ENCODE measurements at regions of chr10 and their contacts with region 1.

Region 1: GRCh38 chr10:79286318-79286951 is 60.8 kb upstream of the PPIF start:
- DNase-seq: peak; percentile 51 to 80 (median 75)
- ATAC-seq: peak; percentile 92
- H3K4me3 ChIP-seq: peak overlapping the region; percentile 34
- H3K4me3 Mint-ChIP-seq: peak overlapping the region; percentile 70 to 80 (median 74)
- H3K27ac ChIP-seq: no peak overlapping the region
- H3K27ac Mint-ChIP-seq: peak overlapping the region; percentile 49 to 88 (median 66)
- H3K4me1 ChIP-seq: peaks cover 21 to 31% of the 10 kb centered on the region in 2 donors
- H3K4me1 Mint-ChIP-seq: peaks cover 24 to 52% (median 38%) of the 10 kb centered on the region in 7 donors
- H3K27me3 ChIP-seq: no peaks in the 10 kb centered on the region
- H3K27me3 Mint-ChIP-seq: no peaks in the 10 kb centered on the region

Region 2: DNA sequence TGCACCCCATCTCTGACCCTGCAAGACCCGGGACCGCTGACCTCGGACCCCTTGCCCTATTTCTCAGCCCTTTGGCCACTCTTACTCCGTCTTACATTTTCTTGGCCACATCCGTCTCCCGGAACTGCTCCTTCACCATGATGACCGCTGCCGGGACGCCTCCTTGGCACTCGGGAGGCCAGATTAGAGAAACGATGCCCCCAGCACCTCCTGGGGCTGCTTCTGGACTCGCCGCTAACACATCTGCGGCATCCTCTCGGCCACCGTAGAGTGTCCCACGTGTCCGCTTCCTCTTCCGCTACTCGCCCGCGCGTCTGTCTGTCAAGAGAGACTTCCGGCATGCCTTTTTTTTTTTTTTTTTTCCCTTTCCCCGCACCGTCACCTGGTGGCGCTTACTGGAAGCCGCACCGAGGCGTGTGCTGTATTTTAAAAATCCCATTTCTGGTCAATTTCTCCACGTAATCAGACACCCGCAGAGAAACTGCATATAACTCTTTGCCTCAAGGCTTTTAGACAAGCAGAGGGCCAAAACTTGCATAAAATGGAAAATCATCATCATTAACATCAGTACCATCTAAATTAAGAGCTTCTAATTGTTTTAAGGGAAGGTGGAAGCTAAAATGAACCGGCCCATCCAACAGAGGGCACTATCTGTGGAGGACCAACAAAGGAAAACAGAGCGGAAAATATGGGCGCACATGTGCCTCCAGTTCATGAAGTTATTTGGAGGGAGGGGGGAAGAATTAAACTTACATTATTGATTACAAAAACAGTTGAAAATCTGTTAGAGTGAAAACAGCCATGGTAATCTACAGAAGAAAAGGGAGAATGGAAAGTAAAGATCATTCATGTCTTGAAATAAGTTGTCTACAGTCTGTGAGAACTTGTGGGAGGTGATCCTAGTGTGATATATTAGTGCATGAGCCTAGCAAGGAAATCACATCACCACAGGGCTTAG is 1256.9 kb before region 1 on chr10 and contains the start of gene POLR3A:
- CTCF ChIA-PET with region 1: no interaction called
- POLR2A ChIA-PET with region 1: no interaction called
- intact Hi-C with region 1: loop called in 1 of 2 experiments (anchors 1 kb)
- DNase-seq: peak; percentile 79 to 94 (median 90)
- ATAC-seq: peak; percentile 77
- H3K4me3 ChIP-seq: peak within 1 kb of the TSS; percentile 99
- H3K4me3 Mint-ChIP-seq: peak within 1 kb of the TSS; percentile 92 to 100 (median 99)
- H3K27ac ChIP-seq: peak within 1 kb of the TSS; percentile 89
- H3K27ac Mint-ChIP-seq: peak within 1 kb of the TSS; percentile 88 to 99 (median 95)
- H3K4me1 ChIP-seq: peaks cover 12 to 19% of the 10 kb centered on the region in 2 donors
- H3K4me1 Mint-ChIP-seq: peaks cover 22 to 50% (median 37%) of the 10 kb centered on the region in 7 donors
- H3K27me3 ChIP-seq: no peaks in the 10 kb centered on the region
- H3K27me3 Mint-ChIP-seq: no peaks in the 10 kb centered on the region
- total RNA-seq, gene POLR3A: 12.0 to 20.9 (median 19.0) TPM

Region 3: DNA sequence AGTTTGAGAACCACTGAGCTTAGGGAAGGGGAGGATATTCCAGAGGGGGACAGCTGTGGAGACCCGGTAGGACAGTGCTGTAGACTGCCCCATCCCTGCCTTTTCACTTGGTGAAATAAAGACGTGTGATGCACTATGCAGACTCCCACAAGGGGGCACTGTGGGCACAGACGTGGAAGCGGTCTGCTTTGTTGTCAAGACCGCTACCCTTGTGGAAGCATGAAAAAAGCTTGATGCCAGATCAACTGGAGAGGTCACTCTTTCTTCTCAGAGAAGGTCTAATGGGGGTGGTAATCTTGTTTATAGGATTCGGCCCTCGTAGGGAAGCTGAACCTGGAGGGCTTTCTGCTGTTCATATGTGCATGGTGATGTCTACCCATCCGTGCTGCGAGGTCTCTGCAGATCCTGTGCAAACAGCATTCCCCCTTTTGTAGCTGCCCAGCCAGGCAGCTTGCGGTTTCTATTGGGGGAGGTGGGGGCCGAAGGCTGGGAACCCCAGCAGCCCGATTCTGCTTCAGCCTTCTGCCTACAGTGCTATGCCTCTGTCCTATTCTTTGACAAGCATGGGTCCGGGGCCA is 1239.0 kb before region 1 on chr10:
- CTCF ChIA-PET with region 1: no interaction called
- POLR2A ChIA-PET with region 1: no interaction called
- intact Hi-C with region 1: loop called in 1 of 2 experiments (anchors 5 kb)
- DNase-seq: peak; percentile 65 to 80 (median 74)
- ATAC-seq: peak; percentile 92
- H3K4me3 ChIP-seq: no peak overlapping the region
- H3K4me3 Mint-ChIP-seq: peak overlapping the region in 2 of 10 donors; percentile 11 to 27
- H3K27ac ChIP-seq: no peak overlapping the region
- H3K27ac Mint-ChIP-seq: peak overlapping the region in 2 of 9 donors; percentile 4 to 9
- H3K4me1 ChIP-seq: no peaks in the 10 kb centered on the region
- H3K4me1 Mint-ChIP-seq: peaks cover 5 to 26% (median 16%) of the 10 kb centered on the region in 7 donors
- H3K27me3 ChIP-seq: no peaks in the 10 kb centered on the region
- H3K27me3 Mint-ChIP-seq: no peaks in the 10 kb centered on the region

Region 4: GRCh38 chr10:79242620-79243152 is 43.7 kb before region 1 on chr10:
- CTCF ChIA-PET with region 1: no interaction called
- POLR2A ChIA-PET with region 1: no interaction called
- intact Hi-C with region 1: loop called (anchors 1 kb)
- DNase-seq: peak; percentile 6 to 71 (median 35)
- ATAC-seq: peak; percentile 39
- H3K4me3 ChIP-seq: peak overlapping the region; percentile 37
- H3K4me3 Mint-ChIP-seq: peak overlapping the region; percentile 43 to 87 (median 77)
- H3K27ac ChIP-seq: no peak overlapping the region
- H3K27ac Mint-ChIP-seq: peak overlapping the region in 1 of 9 donors; percentile 80
- H3K4me1 ChIP-seq: peaks cover 27 to 38% of the 10 kb centered on the region in 2 donors
- H3K4me1 Mint-ChIP-seq: peaks cover 39 to 58% (median 41%) of the 10 kb centered on the region in 7 donors
- H3K27me3 ChIP-seq: no peaks in the 10 kb centered on the region
- H3K27me3 Mint-ChIP-seq: no peaks in the 10 kb centered on the region

Region 5: DNA sequence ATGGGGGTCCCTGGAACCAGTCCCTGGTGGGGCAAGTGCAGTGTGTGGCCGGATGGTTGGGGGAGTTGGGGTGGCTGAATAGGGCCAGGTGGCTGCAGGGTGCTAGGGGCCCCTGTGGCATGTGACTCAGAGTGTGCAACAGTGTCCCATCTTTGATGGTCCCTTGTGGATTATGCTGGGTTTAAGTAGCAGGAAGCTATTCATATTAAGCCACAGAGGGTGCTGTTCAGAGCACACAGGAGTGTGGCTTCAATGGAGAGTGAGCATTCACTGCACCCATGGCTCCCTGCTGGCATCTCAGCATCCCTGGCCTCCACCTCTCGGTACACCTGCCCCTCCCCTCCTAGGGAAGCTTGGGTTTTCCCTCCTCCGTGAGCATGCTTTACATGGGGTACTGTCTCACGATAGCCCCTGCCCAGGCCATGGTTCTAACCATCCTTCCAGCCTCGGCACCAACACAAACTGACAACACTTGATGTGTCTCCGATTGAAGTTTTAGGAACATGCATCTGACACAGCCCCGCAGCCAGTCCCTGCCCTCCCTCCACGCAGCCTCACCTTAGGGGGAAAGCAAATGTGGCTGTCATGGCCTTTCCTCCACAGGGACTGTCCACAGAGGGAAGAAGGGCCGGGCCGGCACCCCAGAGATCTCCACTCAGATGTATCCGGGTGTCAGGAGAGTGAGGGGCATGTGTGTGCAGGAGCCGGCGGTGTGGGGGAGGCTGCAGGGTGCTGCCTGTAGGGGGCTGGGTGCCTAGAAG is 30.4 kb after region 1 on chr10:
- CTCF ChIA-PET with region 1: no interaction called
- POLR2A ChIA-PET with region 1: interaction called, 6 read pairs
- intact Hi-C with region 1: loop called in 1 of 2 experiments (anchors 1 kb)
- DNase-seq: peak in 1 of 9 donors; percentile 12
- ATAC-seq: peak; percentile 13
- H3K4me3 ChIP-seq: peak overlapping the region; percentile 9
- H3K4me3 Mint-ChIP-seq: peak overlapping the region in 9 of 10 donors; percentile 32 to 86 (median 65)
- H3K27ac ChIP-seq: no peak overlapping the region
- H3K27ac Mint-ChIP-seq: peak overlapping the region in 6 of 9 donors; percentile 31 to 95 (median 88)
- H3K4me1 ChIP-seq: peaks cover 39 to 54% of the 10 kb centered on the region in 2 donors
- H3K4me1 Mint-ChIP-seq: peaks cover 53 to 62% (median 60%) of the 10 kb centered on the region in 7 donors
- H3K27me3 ChIP-seq: no peaks in the 10 kb centered on the region
- H3K27me3 Mint-ChIP-seq: peaks cover 0 to 4% (median 0%) of the 10 kb centered on the region in 5 donors

Region 6: GRCh38 chr10:79322616-79323543 is 36.4 kb after region 1 on chr10:
- CTCF ChIA-PET with region 1: no interaction called
- POLR2A ChIA-PET with region 1: interaction called, 8 read pairs
- intact Hi-C with region 1: loop called in 1 of 2 experiments (anchors 1 kb)
- DNase-seq: peak; percentile 53 to 92 (median 90)
- ATAC-seq: peak; percentile 90
- H3K4me3 ChIP-seq: peak overlapping the region; percentile 20
- H3K4me3 Mint-ChIP-seq: peak overlapping the region; percentile 70 to 88 (median 80)
- H3K27ac ChIP-seq: peak overlapping the region; percentile 65
- H3K27ac Mint-ChIP-seq: peak overlapping the region; percentile 77 to 99 (median 94)
- H3K4me1 ChIP-seq: peaks cover 58 to 63% of the 10 kb centered on the region in 2 donors
- H3K4me1 Mint-ChIP-seq: peaks cover 50 to 74% (median 68%) of the 10 kb centered on the region in 7 donors
- H3K27me3 ChIP-seq: no peaks in the 10 kb centered on the region
- H3K27me3 Mint-ChIP-seq: no peaks in the 10 kb centered on the region

Region 7: DNA sequence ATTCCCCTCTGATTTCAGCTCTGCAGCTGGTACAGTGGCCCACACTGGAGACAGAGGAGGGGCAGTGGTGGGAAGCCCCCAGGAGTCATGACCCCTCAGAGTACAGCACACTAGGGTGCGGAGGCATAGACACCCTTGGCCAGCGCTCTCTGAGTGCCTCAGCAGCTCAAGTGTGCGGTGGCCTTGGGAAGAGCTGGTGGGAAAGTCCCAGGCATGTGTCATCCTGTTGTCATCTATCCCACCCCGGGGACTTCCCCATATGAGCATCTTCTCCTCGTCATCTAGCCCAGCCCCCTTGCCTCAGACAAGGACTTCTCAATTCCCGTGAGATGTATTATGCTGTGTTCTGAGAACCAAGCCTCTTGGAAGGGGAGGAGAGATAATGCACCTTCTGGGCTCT is 45.3 kb after region 1 on chr10:
- CTCF ChIA-PET with region 1: no interaction called
- POLR2A ChIA-PET with region 1: interaction called, 3 read pairs
- intact Hi-C with region 1: loop called in 1 of 2 experiments (anchors 2 kb)
- DNase-seq: peak in 6 of 9 donors; percentile 25 to 82 (median 42)
- ATAC-seq: peak; percentile 95
- H3K4me3 ChIP-seq: no peak overlapping the region
- H3K4me3 Mint-ChIP-seq: peak overlapping the region in 1 of 10 donors; percentile 52
- H3K27ac ChIP-seq: no peak overlapping the region
- H3K27ac Mint-ChIP-seq: peak overlapping the region in 8 of 9 donors; percentile 6 to 87 (median 52)
- H3K4me1 ChIP-seq: peaks cover 4 to 14% of the 10 kb centered on the region in 2 donors
- H3K4me1 Mint-ChIP-seq: peaks cover 0 to 44% (median 21%) of the 10 kb centered on the region in 7 donors
- H3K27me3 ChIP-seq: no peaks in the 10 kb centered on the region
- H3K27me3 Mint-ChIP-seq: no peaks in the 10 kb centered on the region

Region 8: DNA sequence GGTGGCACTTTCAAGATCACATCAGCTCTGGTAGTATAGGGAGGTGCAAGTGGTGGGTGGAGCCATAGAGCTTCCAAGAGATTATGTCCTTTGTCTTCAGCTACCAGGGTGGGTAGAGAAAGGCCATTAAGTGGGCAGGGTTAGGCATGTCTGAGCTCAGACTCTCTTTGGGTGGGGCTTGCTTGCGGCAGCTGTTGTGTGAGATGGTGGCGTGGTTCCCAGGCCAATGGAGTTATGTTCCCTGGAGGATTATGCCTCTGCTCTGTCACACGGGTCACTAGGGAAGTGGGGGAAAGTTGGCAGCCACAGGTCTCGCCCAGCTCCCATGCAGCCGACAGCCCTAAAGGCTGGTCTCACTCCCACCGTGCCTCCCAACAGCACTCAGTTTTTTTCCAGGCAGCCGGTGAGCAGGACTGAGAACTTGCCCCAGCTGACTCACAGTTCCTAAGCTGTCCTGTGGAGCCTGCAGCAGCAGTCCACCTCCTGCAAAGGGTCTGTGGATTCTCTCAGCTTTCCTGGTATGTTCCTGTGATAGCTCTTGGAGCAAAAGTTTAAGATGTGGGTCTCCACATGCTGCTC is 1710.3 kb after region 1 on chr10:
- CTCF ChIA-PET with region 1: no interaction called
- POLR2A ChIA-PET with region 1: no interaction called
- intact Hi-C with region 1: no loop called
- DNase-seq: no peak
- ATAC-seq: no peak
- H3K4me3 ChIP-seq: no peak overlapping the region
- H3K4me3 Mint-ChIP-seq: no peak overlapping the region
- H3K27ac ChIP-seq: no peak overlapping the region
- H3K27ac Mint-ChIP-seq: no peak overlapping the region
- H3K4me1 ChIP-seq: no peaks in the 10 kb centered on the region
- H3K4me1 Mint-ChIP-seq: no peaks in the 10 kb centered on the region
- H3K27me3 ChIP-seq: no peaks in the 10 kb centered on the region
- H3K27me3 Mint-ChIP-seq: peaks cover 0 to 37% (median 13%) of the 10 kb centered on the region in 5 donors

Measured in naive thymus-derived CD4-positive, alpha-beta T cell (primary cell).